ENCODE measurements at regions of chr10 and their contacts with region 1.

Region 1: DNA sequence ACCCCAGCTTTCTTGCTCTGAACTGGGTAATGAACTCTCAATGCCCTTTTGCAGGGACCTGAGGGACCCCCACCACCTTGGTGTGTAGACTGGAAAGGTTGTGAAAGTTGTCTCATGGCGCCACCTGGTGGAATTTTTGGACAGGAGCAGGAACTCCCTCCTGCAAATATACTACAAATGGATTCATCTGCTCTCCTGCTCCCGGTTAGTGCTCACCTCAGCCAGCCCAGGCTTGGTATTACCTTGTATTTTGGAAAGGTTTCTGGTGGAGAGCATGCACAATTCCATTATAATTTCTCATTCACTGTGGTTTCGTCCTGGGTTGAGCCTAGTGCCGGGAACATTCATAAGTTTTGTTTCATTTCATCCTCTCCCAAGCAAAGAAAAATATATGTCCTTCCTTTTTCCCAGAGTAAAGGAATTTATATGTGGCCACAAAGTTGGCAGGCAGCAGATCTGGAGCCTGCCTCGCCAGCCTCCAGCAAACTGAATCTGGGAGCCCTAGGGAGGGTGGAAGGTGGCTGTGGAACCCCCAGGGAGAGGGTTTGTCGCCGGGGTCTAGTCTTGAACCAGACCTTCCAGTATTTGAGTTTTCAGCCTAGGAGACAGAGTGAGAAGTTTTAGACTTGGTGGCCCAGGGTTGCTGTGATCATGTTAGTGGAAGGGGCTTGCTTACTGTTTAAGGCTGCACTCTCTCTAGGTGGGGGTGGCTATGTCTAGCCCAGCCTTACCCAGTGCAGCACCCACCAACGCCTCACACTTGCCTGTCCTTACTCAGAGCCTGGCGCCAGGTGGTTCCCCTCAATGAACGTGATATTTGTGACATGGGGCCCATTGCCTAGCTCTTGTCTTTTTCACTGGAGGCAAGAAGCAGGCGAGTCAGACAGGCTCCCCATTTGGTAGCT is 9.5 kb downstream of the FAM241B start:
- DNase-seq: peak in 1 of 2 experiments; percentile 80
- H3K4me3 ChIP-seq: no peak overlapping the region
- H3K27ac ChIP-seq: no peak overlapping the region
- H3K4me1 ChIP-seq: peaks cover 4 to 9% (median 7%) of the 10 kb centered on the region in 4 experiments
- H3K27me3 ChIP-seq: no peaks in the 10 kb centered on the region
- CTCF ChIP-seq: peak; percentile 64 to 97 (median 89)
- EP300 ChIP-seq: 0 out of 3 replicates have a peak, but pooled peaks of 1 of the 2 experiments have one; percentile 33
- POLR2A ChIP-seq: no peak
- RAD21 ChIP-seq: peak; percentile 98 to 99

Region 2: DNA sequence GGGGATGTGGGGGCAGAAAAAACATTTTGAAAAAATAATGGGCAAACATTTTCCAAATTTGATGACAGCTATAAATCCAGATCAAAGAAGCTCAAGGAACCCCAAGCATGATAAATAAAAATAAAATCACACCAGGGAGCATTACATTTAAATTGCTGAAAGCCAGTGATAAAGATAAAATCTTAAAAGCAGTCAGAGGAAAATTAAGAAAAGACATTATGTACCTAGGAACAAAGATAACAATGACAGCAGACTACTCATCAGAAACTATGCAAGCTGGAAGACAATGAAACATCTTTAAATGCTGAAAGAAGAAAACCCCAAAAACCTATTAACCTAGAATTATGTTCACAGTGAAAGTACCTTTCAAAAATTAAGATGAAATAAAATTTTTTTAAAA is 89.6 kb before region 1 on chr10:
- CTCF ChIA-PET with region 1: interaction called, 578 read pairs
- POLR2A ChIA-PET with region 1: no interaction called
- DNase-seq: no peak
- H3K4me3 ChIP-seq: no peak overlapping the region
- H3K27ac ChIP-seq: no peak overlapping the region
- H3K4me1 ChIP-seq: peaks cover 0 to 3% (median 0%) of the 10 kb centered on the region in 4 experiments; a peak in 1 of 7 replicates
- H3K27me3 ChIP-seq: no peaks in the 10 kb centered on the region
- CTCF ChIP-seq: no peak
- EP300 ChIP-seq: no peak
- POLR2A ChIP-seq: no peak
- RAD21 ChIP-seq: no peak

Region 3: GRCh38 chr10:69567920-69568319 is 71.6 kb before region 1 on chr10:
- CTCF ChIA-PET with region 1: interaction called, 578 read pairs
- POLR2A ChIA-PET with region 1: interaction called, 16 read pairs
- DNase-seq: peak in 1 of 2 experiments; percentile 90
- H3K4me3 ChIP-seq: peak overlapping the region in 2 of 4 experiments; percentile 9 to 61; a peak in 3 of 8 replicates
- H3K27ac ChIP-seq: no peak overlapping the region
- H3K4me1 ChIP-seq: peaks cover 19 to 49% (median 35%) of the 10 kb centered on the region in 4 experiments
- H3K27me3 ChIP-seq: peaks cover 52 to 90% (median 78%) of the 10 kb centered on the region in 4 experiments
- CTCF ChIP-seq: no peak
- EP300 ChIP-seq: no peak
- POLR2A ChIP-seq: no peak
- RAD21 ChIP-seq: no peak